ENCODE measurements at regions of chr4 and their contacts with region 1.

Region 1: GRCh38 chr4:176805155-176805554 is 12.4 kb upstream of the VEGFC start:
- DNase-seq: no peak

Region 2: GRCh38 chr4:176635372-176636261 is 169.5 kb before region 1 on chr4:
- intact Hi-C with region 1: no loop called
- DNase-seq: no peak

Region 3: DNA sequence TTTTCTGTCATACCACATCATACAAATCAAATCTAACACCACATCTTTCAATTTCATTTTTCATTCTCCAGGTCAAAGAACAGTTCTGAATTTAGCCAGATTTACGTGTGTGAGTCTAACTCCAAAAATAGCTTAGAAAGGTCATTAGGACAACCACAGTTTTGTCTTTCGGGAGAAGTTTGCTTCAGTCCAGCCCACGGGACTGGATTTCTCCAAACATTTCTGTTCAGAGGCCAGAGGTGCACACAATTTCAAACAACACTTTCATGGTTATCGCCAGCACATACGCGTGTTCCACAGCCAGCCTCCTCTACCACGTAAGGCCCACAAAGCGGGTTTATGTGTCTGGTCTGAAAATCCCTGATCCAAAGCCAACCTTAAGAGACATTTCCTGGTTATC is 78.4 kb before region 1 on chr4:
- intact Hi-C with region 1: no loop called
- DNase-seq: no peak

Region 4: DNA sequence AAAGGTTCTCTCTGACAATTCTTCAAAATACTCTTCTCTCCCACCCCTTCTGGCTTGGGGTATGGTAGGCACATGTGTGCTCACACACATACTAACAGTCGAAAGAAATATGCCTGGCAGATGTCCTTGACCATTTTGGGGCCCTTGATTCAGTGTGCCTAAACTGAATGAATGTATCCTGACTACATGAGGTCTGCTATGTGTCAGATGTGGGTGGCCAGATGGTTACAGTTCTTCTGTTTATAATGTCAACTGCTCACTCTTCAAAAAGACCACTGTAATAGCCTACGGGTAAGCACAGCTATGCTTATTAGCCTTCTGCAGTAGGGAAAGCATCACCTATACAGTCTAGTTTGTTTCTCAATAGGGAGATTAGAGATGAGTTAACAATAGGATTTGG is 51.3 kb after region 1 on chr4:
- intact Hi-C with region 1: loop called (anchors 2 kb)
- DNase-seq: no peak

Region 5: DNA sequence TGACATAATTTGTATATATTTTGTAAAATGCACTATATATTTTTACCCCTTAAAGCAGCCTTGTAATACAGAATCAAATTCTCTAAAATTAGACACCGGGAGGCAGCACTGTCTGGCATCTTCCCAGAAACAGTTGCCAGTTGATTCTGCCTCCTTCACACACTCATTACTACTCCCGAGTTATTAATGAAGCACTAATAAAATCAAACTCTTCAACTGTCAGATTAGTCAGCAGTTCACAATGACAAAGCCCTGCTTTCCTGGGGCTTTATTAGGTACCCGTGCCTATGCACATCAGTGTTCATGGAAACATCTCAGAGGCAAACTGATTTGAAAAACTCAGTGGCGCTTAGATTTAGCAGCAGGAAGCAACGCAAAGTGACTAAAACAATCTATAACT is 91.1 kb after region 1 on chr4:
- intact Hi-C with region 1: no loop called
- DNase-seq: no peak